Panc1 (cell line): ENCODE measurements at regions of chr7 and their contacts with region 1.

Region 1: GRCh38 chr7:51067757-51068156 is 248.9 kb downstream of the COBL start:
- DNase-seq: peak; percentile 78
- ATAC-seq: peak; percentile 92
- H3K4me3 ChIP-seq: no peak overlapping the region
- H3K27ac ChIP-seq: no peak overlapping the region
- H3K4me1 ChIP-seq: no peaks in the 10 kb centered on the region
- H3K27me3 ChIP-seq: peaks cover 2% of the 10 kb centered on the region; the same call in 1 of the 2 replicates
- CTCF ChIP-seq: peak; percentile 85

Region 2: DNA sequence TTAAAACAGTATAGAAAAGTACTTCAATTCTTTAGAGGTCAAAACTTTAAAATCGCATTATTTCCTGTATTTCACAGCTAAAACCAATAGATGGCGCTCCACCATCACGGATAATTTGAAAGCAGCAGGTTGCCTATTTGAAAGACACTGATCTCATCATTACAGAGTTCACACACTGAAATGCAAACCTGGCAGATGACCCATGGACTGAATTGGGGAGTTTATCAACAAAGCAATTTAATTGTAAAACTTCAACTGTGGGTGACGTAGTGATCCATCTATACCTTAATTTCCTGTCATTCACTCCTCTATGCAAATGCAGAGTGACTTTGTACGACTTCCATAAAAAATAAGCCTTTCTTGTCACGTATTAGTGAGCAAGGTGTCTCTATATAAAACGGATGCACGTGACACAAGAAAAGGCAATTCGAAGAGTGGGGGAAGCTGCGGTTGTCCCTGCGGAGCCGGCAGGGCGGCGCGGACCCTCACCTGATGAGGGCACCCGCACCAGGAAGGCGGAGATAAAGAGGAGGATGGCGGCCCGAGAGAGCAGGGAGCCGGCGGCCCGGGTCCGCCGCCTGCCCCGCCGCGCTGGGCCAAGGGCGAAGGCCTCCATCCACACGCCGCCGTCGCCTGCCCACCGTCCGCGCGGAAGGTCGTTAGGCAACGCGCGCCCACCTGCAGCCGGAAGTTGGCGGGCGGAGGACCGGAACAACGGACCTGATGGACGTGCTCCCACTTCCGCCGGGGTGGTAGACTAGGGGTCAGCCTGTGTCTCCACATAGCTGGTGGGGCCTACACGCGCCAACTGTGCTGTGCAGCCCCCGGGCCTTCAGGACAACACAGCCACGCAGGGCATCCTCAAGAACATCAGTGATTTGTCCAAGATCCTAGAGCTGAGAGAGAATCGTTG is 974.9 kb before region 1 on chr7 and contains the start of gene ZPBP:
- CTCF ChIA-PET with region 1: no interaction called
- POLR2A ChIA-PET with region 1: no interaction called
- in situ Hi-C with region 1: no loop called
- intact Hi-C with region 1: loop called (anchors 5 kb)
- DNase-seq: peak; percentile 41
- ATAC-seq: no peak; the same call in 1 of the 2 replicates
- H3K4me3 ChIP-seq: no peak within 1 kb of the TSS
- H3K27ac ChIP-seq: no peak within 1 kb of the TSS
- H3K4me1 ChIP-seq: no peaks in the 10 kb centered on the region
- H3K27me3 ChIP-seq: peaks cover 13% of the 10 kb centered on the region
- CTCF ChIP-seq: peak; percentile 84
- total RNA-seq, gene ZPBP: not detected

Region 3: GRCh38 chr7:50696810-50697582 is 370.8 kb before region 1 on chr7:
- CTCF ChIA-PET with region 1: no interaction called
- POLR2A ChIA-PET with region 1: no interaction called
- in situ Hi-C with region 1: no loop called
- intact Hi-C with region 1: loop called (anchors 2 kb)
- DNase-seq: no peak
- ATAC-seq: peak; percentile 75; the same call in 1 of the 2 replicates
- H3K4me3 ChIP-seq: no peak overlapping the region
- H3K27ac ChIP-seq: no peak overlapping the region
- H3K4me1 ChIP-seq: no peaks in the 10 kb centered on the region
- H3K27me3 ChIP-seq: no peaks in the 10 kb centered on the region
- CTCF ChIP-seq: peak; percentile 71

Region 4: DNA sequence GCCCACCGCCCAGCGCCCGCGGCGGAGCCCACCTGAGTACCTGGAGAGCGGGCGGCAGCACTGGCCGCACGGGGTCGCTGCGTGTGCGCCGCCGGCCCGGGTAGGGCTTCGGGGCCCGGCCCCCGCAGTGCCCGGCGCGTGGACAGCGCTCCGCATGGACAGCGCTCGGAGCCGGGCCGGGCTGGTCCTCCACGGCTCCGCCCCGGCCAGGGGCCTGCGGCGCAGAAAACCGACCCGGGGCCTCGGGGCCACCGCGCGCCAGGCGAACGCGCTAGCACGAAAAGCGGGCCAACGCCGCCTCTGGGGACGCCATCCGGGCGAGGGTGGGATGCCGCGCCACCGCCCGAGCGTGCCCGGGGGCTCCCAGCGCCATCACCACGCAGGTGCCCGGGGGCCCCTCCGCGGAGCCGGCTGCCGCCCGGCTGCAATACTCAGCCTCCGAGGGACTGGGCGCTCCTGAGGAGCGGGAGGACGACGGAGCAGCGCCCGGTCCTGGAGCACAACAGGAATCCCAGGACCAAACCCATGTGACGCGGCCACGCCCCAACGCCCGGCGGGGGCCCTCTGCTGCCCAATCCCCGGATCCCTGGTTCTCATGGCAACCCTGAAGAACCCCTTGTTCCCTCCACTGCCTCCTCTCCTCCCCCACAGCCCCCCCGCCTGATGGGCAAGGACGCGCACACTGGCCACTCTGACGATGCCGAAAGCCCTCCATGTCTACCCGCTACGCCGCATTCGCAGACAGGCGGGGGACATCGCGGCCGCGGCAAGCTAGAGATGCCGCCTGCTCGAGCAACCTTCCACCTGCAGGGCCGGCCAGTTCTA is 285.2 kb before region 1 on chr7 and contains the start of gene GRB10:
- CTCF ChIA-PET with region 1: no interaction called
- POLR2A ChIA-PET with region 1: no interaction called
- in situ Hi-C with region 1: no loop called
- intact Hi-C with region 1: loop called (anchors 5 kb)
- DNase-seq: no peak
- ATAC-seq: peak; percentile 86
- H3K4me3 ChIP-seq: peak within 1 kb of the TSS; percentile 44 to 58
- H3K27ac ChIP-seq: no peak within 1 kb of the TSS
- H3K4me1 ChIP-seq: no peaks in the 10 kb centered on the region
- H3K27me3 ChIP-seq: no peaks in the 10 kb centered on the region
- CTCF ChIP-seq: peak; percentile 85
- total RNA-seq, gene GRB10: 38.3 TPM